ENCODE measurements at regions of chr2 and their contacts with region 1.

Region 1: DNA sequence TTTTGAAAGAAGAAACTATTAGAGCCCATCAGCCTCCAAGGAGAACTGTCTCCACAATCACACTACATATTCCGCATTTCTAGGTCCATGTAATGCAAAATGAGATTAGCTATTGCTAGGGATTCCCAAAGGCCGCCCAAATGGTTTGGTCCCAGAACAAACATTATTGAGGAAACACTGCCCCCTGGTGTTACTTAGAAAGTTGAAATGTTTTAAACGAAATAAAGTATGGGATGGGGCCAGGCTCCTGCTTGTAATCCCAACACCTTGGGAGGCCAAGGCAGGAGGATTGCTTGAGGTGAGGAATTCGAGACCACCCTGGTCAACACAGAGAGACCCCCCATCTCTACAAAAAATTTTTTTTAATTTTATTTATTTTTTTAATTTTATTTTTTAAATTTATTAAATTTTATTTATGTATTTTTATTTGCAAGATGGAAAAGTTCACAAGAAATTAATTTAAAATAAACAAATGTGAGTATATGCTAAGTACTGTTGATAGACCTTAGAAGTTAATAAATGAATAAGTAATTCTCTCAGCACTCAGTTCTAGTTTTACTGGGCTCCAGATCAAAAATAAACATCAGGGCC is 5.5 kb downstream of the NHEJ1 start:
- H3K4me3 ChIP-seq: no peak overlapping the region
- H3K27ac ChIP-seq: no peak overlapping the region
- H3K4me1 ChIP-seq: 0 out of 2 replicates have a peak, but pooled peaks cover 2% of the 10 kb centered on the region
- CTCF ChIP-seq: no peak

Region 2: GRCh38 chr2:218754201-218754600 is 400.9 kb before region 1 on chr2:
- CTCF ChIA-PET with region 1: no interaction called
- POLR2A ChIA-PET with region 1: no interaction called
- H3K4me3 ChIP-seq: no peak overlapping the region
- H3K27ac ChIP-seq: no peak overlapping the region
- H3K4me1 ChIP-seq: no peaks in the 10 kb centered on the region
- CTCF ChIP-seq: no peak

Region 3: GRCh38 chr2:218979846-218980734 is 175.1 kb before region 1 on chr2:
- CTCF ChIA-PET with region 1: interaction called, 25 read pairs
- POLR2A ChIA-PET with region 1: no interaction called
- H3K4me3 ChIP-seq: peak overlapping the region; percentile 42
- H3K27ac ChIP-seq: no peak overlapping the region; the same call in 1 of the 2 replicates
- H3K4me1 ChIP-seq: 0 out of 2 replicates have a peak, but pooled peaks cover 2% of the 10 kb centered on the region
- CTCF ChIP-seq: peak; percentile 99

Region 4: GRCh38 chr2:219002395-219003266 is 152.5 kb before region 1 on chr2:
- CTCF ChIA-PET with region 1: interaction called, 15 read pairs
- POLR2A ChIA-PET with region 1: no interaction called
- H3K4me3 ChIP-seq: peak overlapping the region; percentile 28
- H3K27ac ChIP-seq: no peak overlapping the region; the same call in 1 of the 2 replicates
- H3K4me1 ChIP-seq: no peaks in the 10 kb centered on the region
- CTCF ChIP-seq: peak; percentile 86

Region 5: DNA sequence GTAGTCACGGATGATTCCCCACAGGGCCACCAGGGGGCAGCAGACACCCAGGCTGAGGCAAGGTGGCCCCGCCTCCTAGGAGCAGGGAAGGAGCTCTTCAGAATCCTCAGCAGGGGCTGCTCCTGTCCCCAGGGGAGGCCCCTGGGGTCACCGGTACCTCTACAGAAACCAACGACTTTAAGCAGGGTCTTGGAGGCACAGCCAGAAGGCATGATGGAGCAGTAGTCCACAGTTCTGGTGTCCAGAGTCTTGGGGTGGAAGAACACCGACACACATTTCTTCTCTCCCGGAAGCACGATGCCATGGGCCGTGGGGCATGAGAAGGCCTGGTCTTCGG is 125.4 kb before region 1 on chr2:
- CTCF ChIA-PET with region 1: interaction called, 119 read pairs
- POLR2A ChIA-PET with region 1: interaction called, 5 read pairs
- H3K4me3 ChIP-seq: no peak overlapping the region
- H3K27ac ChIP-seq: no peak overlapping the region
- H3K4me1 ChIP-seq: no peaks in the 10 kb centered on the region
- CTCF ChIP-seq: peak; percentile 93

Region 6: DNA sequence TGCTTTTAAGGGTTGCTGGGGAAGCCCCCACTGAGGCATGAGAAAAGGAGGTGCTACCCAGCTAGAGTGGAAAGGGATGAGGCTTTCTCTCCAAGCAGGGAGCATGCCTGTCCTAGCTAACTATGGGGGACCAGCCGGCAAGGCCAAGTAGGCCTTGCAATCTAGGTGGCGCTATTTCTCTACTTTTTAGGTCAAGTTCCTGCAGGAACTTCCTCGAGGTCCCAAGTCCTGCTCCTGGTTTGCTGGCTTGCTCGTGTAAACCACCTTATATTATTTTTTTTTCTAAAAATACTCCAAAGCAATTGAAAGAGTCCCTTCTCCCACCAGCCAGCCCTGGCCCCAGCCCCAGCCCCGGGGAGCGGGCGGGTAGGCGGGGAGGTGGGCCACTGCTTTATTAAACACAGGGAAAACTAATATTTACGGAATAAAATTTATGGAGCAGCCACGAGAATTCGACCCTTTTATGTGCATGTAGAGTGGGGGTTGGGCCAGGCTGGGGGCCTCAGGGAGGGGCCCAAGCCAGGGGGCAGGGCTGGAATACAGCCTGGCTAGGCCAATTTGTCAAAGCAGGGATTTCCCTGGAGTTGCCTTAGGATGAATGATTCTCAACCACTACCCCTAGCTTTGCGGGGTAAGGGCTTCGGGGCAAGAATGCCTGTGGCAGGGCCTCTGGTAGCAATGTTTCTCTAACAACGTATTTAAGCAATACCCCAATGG is 81.6 kb before region 1 on chr2:
- CTCF ChIA-PET with region 1: interaction called, 58 read pairs
- POLR2A ChIA-PET with region 1: no interaction called
- H3K4me3 ChIP-seq: no peak overlapping the region
- H3K27ac ChIP-seq: no peak overlapping the region
- H3K4me1 ChIP-seq: no peaks in the 10 kb centered on the region
- CTCF ChIP-seq: no peak

Region 7: GRCh38 chr2:219133976-219134375 is 21.2 kb before region 1 on chr2:
- CTCF ChIA-PET with region 1: interaction called, 17 read pairs
- POLR2A ChIA-PET with region 1: no interaction called
- H3K4me3 ChIP-seq: no peak overlapping the region
- H3K27ac ChIP-seq: no peak overlapping the region
- H3K4me1 ChIP-seq: no peaks in the 10 kb centered on the region
- CTCF ChIP-seq: no peak